Naive thymus-derived CD4-positive, alpha-beta T cell (primary cell): ENCODE measurements at regions of chr5 and their contacts with region 1.

Region 1: DNA sequence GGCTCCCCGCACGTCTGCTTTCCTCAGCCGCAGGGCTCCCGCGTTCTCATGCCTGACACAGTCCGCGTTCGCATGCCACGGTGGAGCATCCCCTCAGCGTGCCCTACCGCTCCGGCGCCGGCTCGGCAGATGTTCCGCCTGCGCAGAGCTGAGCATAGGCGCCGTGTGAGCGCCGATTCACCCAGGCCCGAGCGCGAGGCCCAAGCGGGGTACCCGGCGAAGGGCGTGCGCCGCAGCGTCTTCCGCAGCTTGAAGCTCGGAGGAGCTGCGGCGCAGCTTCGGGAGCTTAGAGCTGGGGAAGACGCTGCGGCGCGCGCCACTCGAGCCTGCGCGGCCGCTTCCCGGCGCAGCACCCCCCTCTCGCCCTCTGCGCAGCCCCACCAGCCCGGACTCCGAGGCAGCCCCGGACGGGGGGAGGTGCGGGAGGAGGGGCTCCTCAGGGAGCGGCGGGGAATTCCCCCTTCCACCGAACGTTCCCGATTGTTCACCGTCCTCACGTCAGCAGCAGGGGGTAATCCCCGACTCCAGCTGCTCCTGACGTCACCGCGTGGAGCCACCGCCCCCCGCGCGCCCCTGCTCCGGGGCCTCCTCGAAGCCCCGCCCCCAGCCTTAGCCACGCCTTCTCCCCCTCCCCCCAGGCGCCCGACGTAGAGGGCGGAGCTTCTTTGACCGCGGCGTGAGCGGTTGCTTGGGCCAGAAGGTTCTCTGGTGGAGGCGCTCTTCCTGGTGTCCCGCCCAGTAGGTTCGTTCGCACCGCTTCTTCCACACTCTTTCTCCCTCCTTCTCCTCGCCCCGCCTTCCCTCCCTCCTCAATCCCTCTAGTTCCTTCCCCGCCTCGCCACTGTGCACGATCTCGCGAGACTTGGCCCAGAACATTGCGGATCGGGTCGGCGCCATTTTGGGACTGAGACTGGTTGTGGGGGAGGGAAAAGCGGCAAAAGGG is at the start of gene GPBP1:
- DNase-seq: peak; percentile 94 to 99 (median 98)
- ATAC-seq: peak; percentile 88
- H3K4me3 ChIP-seq: peak within 1 kb of the TSS; percentile 95
- H3K4me3 Mint-ChIP-seq: peak within 1 kb of the TSS; percentile 89 to 100 (median 97)
- H3K27ac ChIP-seq: peak within 1 kb of the TSS; percentile 99
- H3K27ac Mint-ChIP-seq: peak within 1 kb of the TSS; percentile 92 to 100 (median 98)
- H3K4me1 ChIP-seq: peaks cover 4 to 8% of the 10 kb centered on the region in 2 donors
- H3K4me1 Mint-ChIP-seq: peaks cover 23 to 38% (median 29%) of the 10 kb centered on the region in 7 donors
- H3K27me3 ChIP-seq: no peaks in the 10 kb centered on the region
- H3K27me3 Mint-ChIP-seq: no peaks in the 10 kb centered on the region
- total RNA-seq, gene GPBP1: 99.2 to 149 (median 116) TPM

Region 2: DNA sequence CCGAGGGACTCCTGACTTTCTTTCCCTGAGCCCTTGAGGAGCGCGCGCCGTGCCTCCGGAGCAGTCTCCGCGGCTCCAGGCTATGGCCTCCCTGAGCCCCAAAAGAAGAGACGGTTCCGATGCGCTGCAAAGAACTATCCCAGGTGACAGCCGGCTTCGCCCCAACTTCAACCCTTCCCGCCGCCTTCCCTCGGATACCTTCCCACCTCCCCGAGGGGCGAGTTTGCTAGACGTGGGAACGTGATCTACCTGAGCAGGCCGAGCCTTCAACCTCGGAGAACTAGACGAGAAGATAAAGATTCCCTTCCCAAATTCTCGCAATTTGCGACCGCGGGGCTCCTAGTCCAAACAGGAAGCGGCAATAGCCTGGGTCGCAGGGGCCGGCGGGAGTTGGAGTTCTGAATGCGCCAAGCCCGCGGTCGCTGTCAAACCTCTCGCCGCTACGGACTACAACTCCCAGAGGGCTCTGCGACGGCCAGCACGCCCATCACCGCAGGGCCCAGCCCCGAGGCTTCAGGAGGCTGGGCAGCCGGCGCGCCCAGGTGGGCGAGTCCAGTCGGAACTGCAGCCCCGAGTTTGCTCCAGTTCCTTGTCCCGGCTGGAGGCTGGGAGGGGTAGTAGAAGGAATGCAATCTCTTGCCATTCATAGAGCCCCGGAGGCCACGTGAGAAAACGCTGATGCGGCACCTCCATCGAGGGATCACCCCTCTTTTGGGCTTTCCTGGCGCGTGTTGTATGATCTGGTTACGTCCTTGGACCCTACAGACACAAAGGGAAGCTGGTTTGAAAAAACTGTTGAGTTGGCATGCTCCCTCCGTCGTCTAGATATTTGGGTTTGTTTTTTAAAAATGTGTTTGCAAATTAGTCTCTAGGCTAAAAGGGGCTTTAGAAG is 1461.2 kb before region 1 on chr5 and contains the start of gene SLC38A9:
- CTCF ChIA-PET with region 1: no interaction called
- POLR2A ChIA-PET with region 1: no interaction called
- intact Hi-C with region 1: loop called in 1 of 2 experiments (anchors 1 kb)
- DNase-seq: peak; percentile 82 to 91 (median 90)
- ATAC-seq: peak; percentile 100
- H3K4me3 ChIP-seq: peak within 1 kb of the TSS; percentile 87
- H3K4me3 Mint-ChIP-seq: peak within 1 kb of the TSS; percentile 94 to 99 (median 98)
- H3K27ac ChIP-seq: peak within 1 kb of the TSS; percentile 72
- H3K27ac Mint-ChIP-seq: peak within 1 kb of the TSS; percentile 76 to 97 (median 91)
- H3K4me1 ChIP-seq: peaks cover 12 to 16% of the 10 kb centered on the region in 2 donors
- H3K4me1 Mint-ChIP-seq: peaks cover 20 to 40% (median 29%) of the 10 kb centered on the region in 7 donors
- H3K27me3 ChIP-seq: no peaks in the 10 kb centered on the region
- H3K27me3 Mint-ChIP-seq: peaks cover 0 to 3% (median 0%) of the 10 kb centered on the region in 5 donors
- total RNA-seq, gene SLC38A9: 17.7 to 32.6 (median 30.4) TPM

Region 3: GRCh38 chr5:56155992-56156584 is 1017.4 kb before region 1 on chr5:
- CTCF ChIA-PET with region 1: no interaction called
- POLR2A ChIA-PET with region 1: no interaction called
- intact Hi-C with region 1: loop called in 1 of 2 experiments (anchors 10 kb)
- DNase-seq: no peak
- ATAC-seq: peak; percentile 48
- H3K4me3 ChIP-seq: no peak overlapping the region
- H3K4me3 Mint-ChIP-seq: peak overlapping the region; percentile 25 to 96 (median 94)
- H3K27ac ChIP-seq: peak overlapping the region; percentile 61
- H3K27ac Mint-ChIP-seq: peak overlapping the region; percentile 87 to 98 (median 95)
- H3K4me1 ChIP-seq: peaks cover 11 to 71% of the 10 kb centered on the region in 2 donors
- H3K4me1 Mint-ChIP-seq: peaks cover 60 to 89% (median 79%) of the 10 kb centered on the region in 7 donors
- H3K27me3 ChIP-seq: peaks cover 0 to 2% of the 10 kb centered on the region in 2 donors
- H3K27me3 Mint-ChIP-seq: no peaks in the 10 kb centered on the region

Region 4: GRCh38 chr5:56909294-56910209 is 263.9 kb before region 1 on chr5 and contains the start of gene SETD9:
- CTCF ChIA-PET with region 1: no interaction called
- POLR2A ChIA-PET with region 1: interaction called, 7 read pairs
- intact Hi-C with region 1: loop called (anchors 1 kb)
- DNase-seq: peak; percentile 67 to 94 (median 73)
- ATAC-seq: peak; percentile 90
- H3K4me3 ChIP-seq: peak within 1 kb of the TSS; percentile 75
- H3K4me3 Mint-ChIP-seq: peak within 1 kb of the TSS; percentile 88 to 100 (median 91)
- H3K27ac ChIP-seq: peak within 1 kb of the TSS; percentile 79
- H3K27ac Mint-ChIP-seq: peak within 1 kb of the TSS; percentile 81 to 97 (median 89)
- H3K4me1 ChIP-seq: no peaks in the 10 kb centered on the region
- H3K4me1 Mint-ChIP-seq: peaks cover 12 to 24% (median 21%) of the 10 kb centered on the region in 7 donors
- H3K27me3 ChIP-seq: no peaks in the 10 kb centered on the region
- H3K27me3 Mint-ChIP-seq: peaks cover 0 to 15% (median 0%) of the 10 kb centered on the region in 5 donors
- total RNA-seq, gene SETD9: 3.7 to 9.7 (median 6.6) TPM

Region 5: DNA sequence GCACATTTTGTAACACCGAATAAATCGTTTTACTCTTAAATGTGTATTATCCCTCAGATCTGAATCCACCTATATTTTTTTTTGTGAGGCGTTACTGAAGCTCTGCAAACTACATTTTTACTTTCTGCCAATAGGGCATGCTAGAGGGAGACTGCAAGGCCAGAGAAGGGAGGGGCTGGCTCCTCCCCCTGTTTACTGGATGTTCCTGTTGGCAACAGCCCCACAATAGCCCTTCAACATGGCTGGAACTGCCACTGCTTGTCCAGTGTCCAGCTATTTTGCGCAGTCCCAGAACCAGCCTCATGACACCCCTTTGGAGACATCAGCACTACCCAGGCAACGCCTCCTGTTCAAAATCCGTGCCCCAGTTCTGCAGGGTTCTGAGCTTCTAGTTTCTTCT is 136.1 kb before region 1 on chr5:
- CTCF ChIA-PET with region 1: no interaction called
- POLR2A ChIA-PET with region 1: no interaction called
- intact Hi-C with region 1: no loop called
- DNase-seq: no peak
- ATAC-seq: no peak
- H3K4me3 ChIP-seq: no peak overlapping the region
- H3K4me3 Mint-ChIP-seq: no peak overlapping the region
- H3K27ac ChIP-seq: no peak overlapping the region
- H3K27ac Mint-ChIP-seq: no peak overlapping the region
- H3K4me1 ChIP-seq: no peaks in the 10 kb centered on the region
- H3K4me1 Mint-ChIP-seq: peaks cover 0 to 1% (median 0%) of the 10 kb centered on the region in 7 donors
- H3K27me3 ChIP-seq: no peaks in the 10 kb centered on the region
- H3K27me3 Mint-ChIP-seq: peaks cover 0 to 19% (median 0%) of the 10 kb centered on the region in 5 donors

Region 6: GRCh38 chr5:57137401-57137800 is 36.1 kb before region 1 on chr5:
- CTCF ChIA-PET with region 1: interaction called, 3 read pairs
- POLR2A ChIA-PET with region 1: no interaction called
- intact Hi-C with region 1: loop called (anchors 1 to 2 kb)
- DNase-seq: no peak
- ATAC-seq: no peak
- H3K4me3 ChIP-seq: no peak overlapping the region
- H3K4me3 Mint-ChIP-seq: no peak overlapping the region
- H3K27ac ChIP-seq: no peak overlapping the region
- H3K27ac Mint-ChIP-seq: peak overlapping the region in 1 of 9 donors; percentile 4
- H3K4me1 ChIP-seq: no peaks in the 10 kb centered on the region
- H3K4me1 Mint-ChIP-seq: no peaks in the 10 kb centered on the region
- H3K27me3 ChIP-seq: no peaks in the 10 kb centered on the region
- H3K27me3 Mint-ChIP-seq: peaks cover 0 to 41% (median 0%) of the 10 kb centered on the region in 5 donors

Region 7: GRCh38 chr5:57221049-57221568 is 47.7 kb after region 1 on chr5:
- CTCF ChIA-PET with region 1: interaction called, 4 read pairs
- POLR2A ChIA-PET with region 1: no interaction called
- intact Hi-C with region 1: loop called (anchors 1 kb)
- DNase-seq: peak in 7 of 9 donors; percentile 41 to 79 (median 73)
- ATAC-seq: peak; percentile 86
- H3K4me3 ChIP-seq: no peak overlapping the region
- H3K4me3 Mint-ChIP-seq: peak overlapping the region in 1 of 10 donors; percentile 30
- H3K27ac ChIP-seq: no peak overlapping the region
- H3K27ac Mint-ChIP-seq: peak overlapping the region in 8 of 9 donors; percentile 19 to 87 (median 76)
- H3K4me1 ChIP-seq: peaks cover 4 to 7% of the 10 kb centered on the region in 2 donors
- H3K4me1 Mint-ChIP-seq: peaks cover 3 to 62% (median 41%) of the 10 kb centered on the region in 7 donors
- H3K27me3 ChIP-seq: no peaks in the 10 kb centered on the region
- H3K27me3 Mint-ChIP-seq: no peaks in the 10 kb centered on the region

Region 8: GRCh38 chr5:59126708-59127573 is 1953.5 kb after region 1 on chr5:
- CTCF ChIA-PET with region 1: no interaction called
- POLR2A ChIA-PET with region 1: no interaction called
- intact Hi-C with region 1: loop called in 1 of 2 experiments (anchors 2 kb)
- DNase-seq: peak in 1 of 9 donors; percentile 17
- ATAC-seq: peak; percentile 9
- H3K4me3 ChIP-seq: peak overlapping the region; percentile 46
- H3K4me3 Mint-ChIP-seq: no peak overlapping the region
- H3K27ac ChIP-seq: peak overlapping the region; percentile 84
- H3K27ac Mint-ChIP-seq: no peak overlapping the region
- H3K4me1 ChIP-seq: peaks cover 58 to 59% of the 10 kb centered on the region in 2 donors
- H3K4me1 Mint-ChIP-seq: peaks cover 0 to 20% (median 7%) of the 10 kb centered on the region in 7 donors
- H3K27me3 ChIP-seq: no peaks in the 10 kb centered on the region
- H3K27me3 Mint-ChIP-seq: no peaks in the 10 kb centered on the region